ENCODE measurements at regions of chr18 and their contacts with region 1.

Region 1: DNA sequence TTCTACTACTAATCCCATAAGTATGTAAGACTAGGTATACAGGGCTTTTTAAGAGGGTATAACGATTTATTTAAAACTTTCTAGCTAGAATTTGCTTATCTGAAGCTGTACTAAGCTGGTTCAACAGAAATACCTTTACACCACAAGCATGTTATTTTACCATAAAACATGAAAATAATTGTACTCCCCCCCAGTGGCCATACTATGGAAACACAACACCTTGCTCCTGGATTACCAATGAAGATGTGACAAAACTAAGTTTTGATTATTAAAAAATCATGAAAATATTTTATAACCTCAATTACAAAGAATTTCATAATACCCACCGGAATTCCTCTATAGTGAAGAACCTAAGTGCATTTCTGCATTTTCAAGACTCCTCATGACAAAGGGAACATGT is 27.3 kb downstream of the LPIN2 start:
- DNase-seq: peak; percentile 56
- ATAC-seq: no peak
- H3K4me3 ChIP-seq: no peak overlapping the region
- H3K27ac ChIP-seq: no peak overlapping the region
- H3K4me1 ChIP-seq: peaks cover 33% of the 10 kb centered on the region
- H3K27me3 ChIP-seq: no peaks in the 10 kb centered on the region
- CTCF ChIP-seq: peak; percentile 79

Region 2: DNA sequence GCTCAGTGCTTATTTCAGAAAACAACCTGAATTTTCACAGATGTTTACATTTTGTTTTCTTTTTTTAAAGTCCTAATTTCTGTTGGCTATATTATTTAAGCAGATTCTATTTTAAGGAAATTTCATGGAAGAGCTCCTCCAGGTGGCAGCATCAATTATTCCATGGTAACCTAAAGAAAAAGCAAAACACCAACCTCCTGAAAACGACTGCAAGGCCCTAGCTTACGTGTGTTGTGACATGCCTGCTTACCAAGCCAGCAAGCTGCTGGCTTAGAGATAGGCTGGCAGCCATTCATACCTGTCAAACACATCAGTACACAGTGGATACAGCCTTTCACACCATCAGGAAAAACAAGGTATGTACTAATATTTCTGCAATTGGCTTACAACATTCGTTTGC is 37.6 kb before region 1 on chr18:
- CTCF ChIA-PET with region 1: interaction called, 10 read pairs
- POLR2A ChIA-PET with region 1: no interaction called
- intact Hi-C with region 1: loop called (anchors 5 kb)
- DNase-seq: peak; percentile 36
- ATAC-seq: peak; percentile 63
- H3K4me3 ChIP-seq: no peak overlapping the region
- H3K27ac ChIP-seq: no peak overlapping the region
- H3K4me1 ChIP-seq: no peaks in the 10 kb centered on the region
- H3K27me3 ChIP-seq: no peaks in the 10 kb centered on the region
- CTCF ChIP-seq: peak; percentile 71

Measured in PC-3 (cell line).